Left cardiac atrium (tissue), 4 donors: ENCODE measurements at regions of chr1 and their contacts with region 1.

Region 1: GRCh38 chr1:27489910-27490741 is at the start of gene WASF2:
- DNase-seq: peak; percentile 97
- ATAC-seq: peak; percentile 95 to 96
- total RNA-seq, gene WASF2: 71.8 to 77.4 TPM

Region 2: GRCh38 chr1:27430903-27431600 is 59.1 kb before region 1 on chr1:
- intact Hi-C with region 1: loop called (anchors 5 to 10 kb)
- DNase-seq: no peak
- ATAC-seq: peak; percentile 11 to 34

Region 3: DNA sequence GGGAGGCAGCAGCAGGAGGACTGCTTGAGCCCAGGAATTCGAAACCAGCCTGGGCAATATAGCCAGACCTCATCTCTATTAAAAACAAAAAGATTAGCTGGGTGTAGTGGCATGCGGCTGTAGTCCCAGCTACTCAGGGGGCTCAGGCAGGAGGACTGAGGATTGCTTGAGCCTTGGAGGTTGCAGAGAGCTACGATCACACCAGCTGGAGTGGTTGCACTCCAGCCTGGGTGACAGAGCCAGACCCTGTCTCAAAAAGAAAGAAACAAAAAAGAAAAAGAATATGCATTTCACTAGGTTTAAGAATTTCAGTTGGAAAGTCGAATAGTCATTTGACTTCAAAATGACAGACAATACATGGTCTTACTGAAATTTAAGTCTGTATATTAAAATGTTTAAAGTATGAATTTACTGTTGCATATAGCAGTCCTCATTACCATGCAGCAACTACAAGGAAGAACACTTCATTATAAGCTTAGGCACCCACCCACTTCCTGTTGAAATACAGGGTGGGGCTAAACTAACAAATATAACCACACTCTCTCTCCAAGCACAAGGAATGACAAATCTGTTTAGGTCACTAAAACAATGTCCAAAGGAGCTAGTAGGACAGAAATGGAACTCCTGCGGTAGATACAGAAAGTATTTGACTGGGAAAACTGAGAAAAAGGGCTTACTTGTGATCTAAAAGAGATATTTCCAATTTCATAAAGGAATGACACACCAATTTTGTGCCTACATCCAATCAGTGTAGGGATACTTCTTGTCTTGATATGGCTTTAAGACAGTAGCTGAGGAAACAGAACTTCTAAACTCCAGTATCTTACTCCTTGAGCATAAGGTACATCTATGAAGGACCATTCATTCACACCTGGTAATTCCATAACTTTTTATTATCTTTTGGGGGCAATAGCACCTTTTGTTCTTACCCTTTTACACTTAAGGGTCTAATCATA is 53.6 kb before region 1 on chr1:
- intact Hi-C with region 1: loop called (anchors 5 to 10 kb)
- DNase-seq: no peak
- ATAC-seq: peak; percentile 79 to 83

Region 4: GRCh38 chr1:27979151-27979858 is 489.2 kb after region 1 on chr1:
- intact Hi-C with region 1: no loop called
- DNase-seq: no peak
- ATAC-seq: peak; percentile 78 to 81